Dorsolateral prefrontal cortex (tissue), 120 donors: ENCODE measurements at regions of chr14 and their contacts with region 1.

Region 1: GRCh38 chr14:49692811-49693734 is at the start of gene KLHDC1:
- DNase-seq: peak; percentile 71 to 93 (median 86)
- H3K4me3 ChIP-seq: peak within 1 kb of the TSS; percentile 49 to 94 (median 78)
- H3K27ac ChIP-seq: peak within 1 kb of the TSS; percentile 74 to 99 (median 93)
- H3K27me3 ChIP-seq: no peaks in the 10 kb centered on the region
- CTCF ChIP-seq: peak in 25 of 56 donors; percentile 9 to 41 (median 26)
- total RNA-seq, gene KLHDC1: 14.3 to 47.1 (median 25.4) TPM

Region 2: GRCh38 chr14:49732896-49733295 is 39.8 kb after region 1 on chr14:
- intact Hi-C with region 1: loop called in 1 of 2 experiments (anchors 2 kb)
- DNase-seq: no peak
- H3K4me3 ChIP-seq: peak overlapping the region in 7 of 59 donors; percentile 5 to 41 (median 19)
- H3K27ac ChIP-seq: peak overlapping the region in 50 of 59 donors; percentile 2 to 89 (median 62)
- H3K27me3 ChIP-seq: no peaks in the 10 kb centered on the region
- CTCF ChIP-seq: no peak

Region 3: GRCh38 chr14:50123062-50123461 is 430.0 kb after region 1 on chr14:
- intact Hi-C with region 1: no loop called
- DNase-seq: no peak
- H3K4me3 ChIP-seq: peak overlapping the region in 3 of 59 donors; percentile 2 to 17 (median 8)
- H3K27ac ChIP-seq: peak overlapping the region in 52 of 59 donors; percentile 3 to 84 (median 58)
- H3K27me3 ChIP-seq: no peaks in the 10 kb centered on the region
- CTCF ChIP-seq: peak in 5 of 56 donors; percentile 7 to 22 (median 12)